ENCODE measurements at regions of chr3 and their contacts with region 1.

Region 1: GRCh38 chr3:39288300-39288808 is 8.5 kb upstream of the CX3CR1 start:
- DNase-seq: peak; percentile 90
- ATAC-seq: peak; percentile 96
- H3K4me3 Mint-ChIP-seq: no peak overlapping the region
- H3K27ac Mint-ChIP-seq: no peak overlapping the region
- H3K4me1 Mint-ChIP-seq: peaks cover 13% of the 10 kb centered on the region
- H3K27me3 Mint-ChIP-seq: no peaks in the 10 kb centered on the region

Region 2: DNA sequence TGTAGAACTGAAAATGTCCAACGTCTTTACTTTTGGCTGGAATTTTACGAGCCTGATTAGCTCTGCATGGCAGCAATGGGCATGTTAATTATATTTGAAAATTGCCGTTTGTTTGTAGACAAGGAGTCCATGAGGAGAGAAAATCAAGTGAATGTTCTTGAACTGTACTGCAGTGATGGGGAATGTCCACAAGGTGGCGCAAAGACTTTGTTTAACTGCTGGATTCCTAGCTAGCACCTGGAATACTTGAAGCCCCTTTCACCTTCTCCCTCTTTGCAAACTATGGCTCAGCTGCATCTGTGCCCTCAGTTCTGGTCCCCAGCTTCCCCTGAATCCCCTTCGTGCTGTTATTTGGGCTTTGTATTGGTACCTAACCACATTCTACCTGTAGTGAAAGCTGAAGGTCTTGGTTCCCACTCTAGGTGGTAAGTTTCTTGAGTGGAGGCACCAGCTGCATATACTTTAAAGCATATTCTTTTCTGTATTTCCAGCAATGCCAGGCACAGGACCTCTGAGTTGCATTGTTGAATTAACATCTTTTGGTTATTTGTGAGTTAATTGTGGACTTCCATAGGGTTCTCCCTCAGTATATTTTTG is 766.9 kb before region 1 on chr3:
- CTCF ChIA-PET with region 1: interaction called, 3 read pairs
- POLR2A ChIA-PET with region 1: no interaction called
- intact Hi-C with region 1: loop called in 1 of 2 experiments (anchors 5 kb)
- DNase-seq: peak; percentile 75
- ATAC-seq: peak; percentile 74
- H3K4me3 Mint-ChIP-seq: no peak overlapping the region
- H3K27ac Mint-ChIP-seq: no peak overlapping the region
- H3K4me1 Mint-ChIP-seq: peaks cover 23% of the 10 kb centered on the region
- H3K27me3 Mint-ChIP-seq: no peaks in the 10 kb centered on the region

Region 3: DNA sequence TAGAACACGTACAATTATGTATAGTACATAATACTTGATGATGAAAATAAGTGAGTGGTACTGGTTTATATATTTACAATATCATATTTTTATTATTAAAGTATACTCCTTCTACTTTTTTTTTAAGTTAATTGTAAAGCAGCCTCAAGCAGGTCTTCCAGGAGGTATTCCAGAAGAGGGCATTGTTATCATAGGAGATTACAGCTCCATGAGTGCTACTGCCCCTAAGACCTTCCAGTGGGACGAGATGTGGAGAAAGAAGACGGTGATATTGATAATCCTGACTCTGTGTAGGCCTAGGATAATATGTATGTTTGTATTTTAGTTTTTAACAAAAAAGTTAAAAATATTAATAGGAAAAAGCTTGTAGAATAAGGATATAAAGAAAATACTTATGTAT is 598.6 kb before region 1 on chr3:
- CTCF ChIA-PET with region 1: no interaction called
- POLR2A ChIA-PET with region 1: no interaction called
- intact Hi-C with region 1: no loop called
- DNase-seq: no peak
- ATAC-seq: no peak
- H3K4me3 Mint-ChIP-seq: no peak overlapping the region
- H3K27ac Mint-ChIP-seq: no peak overlapping the region
- H3K4me1 Mint-ChIP-seq: no peaks in the 10 kb centered on the region
- H3K27me3 Mint-ChIP-seq: peaks cover 4% of the 10 kb centered on the region

Region 4: GRCh38 chr3:38878646-38879045 is 409.7 kb before region 1 on chr3:
- CTCF ChIA-PET with region 1: no interaction called
- POLR2A ChIA-PET with region 1: no interaction called
- intact Hi-C with region 1: no loop called
- DNase-seq: no peak
- ATAC-seq: no peak
- H3K4me3 Mint-ChIP-seq: no peak overlapping the region
- H3K27ac Mint-ChIP-seq: no peak overlapping the region
- H3K4me1 Mint-ChIP-seq: no peaks in the 10 kb centered on the region
- H3K27me3 Mint-ChIP-seq: peaks cover 5% of the 10 kb centered on the region

Region 5: DNA sequence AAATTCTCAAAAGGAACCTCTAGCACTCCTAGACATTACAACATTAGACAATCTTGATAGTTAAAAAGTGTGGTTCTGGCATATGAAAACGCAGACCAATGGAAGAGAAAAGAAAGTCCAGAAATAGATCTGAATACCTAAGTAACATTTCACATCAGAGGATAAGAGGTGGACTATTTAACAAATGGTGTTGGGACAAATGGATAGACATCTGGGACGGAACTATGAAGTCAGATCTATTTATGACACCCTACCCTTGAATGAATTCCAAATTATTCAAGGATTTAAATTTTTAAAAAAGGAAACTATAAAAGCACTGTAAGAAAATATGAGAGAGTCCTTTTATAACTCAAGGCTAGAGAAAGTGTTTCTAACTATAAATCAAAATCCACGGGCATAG is 348.0 kb before region 1 on chr3:
- CTCF ChIA-PET with region 1: no interaction called
- POLR2A ChIA-PET with region 1: no interaction called
- intact Hi-C with region 1: no loop called
- DNase-seq: no peak
- ATAC-seq: no peak
- H3K4me3 Mint-ChIP-seq: no peak overlapping the region
- H3K27ac Mint-ChIP-seq: no peak overlapping the region
- H3K4me1 Mint-ChIP-seq: no peaks in the 10 kb centered on the region
- H3K27me3 Mint-ChIP-seq: no peaks in the 10 kb centered on the region

Region 6: GRCh38 chr3:39013289-39013688 is 275.1 kb before region 1 on chr3:
- CTCF ChIA-PET with region 1: no interaction called
- POLR2A ChIA-PET with region 1: no interaction called
- intact Hi-C with region 1: no loop called
- DNase-seq: no peak
- ATAC-seq: no peak
- H3K4me3 Mint-ChIP-seq: no peak overlapping the region
- H3K27ac Mint-ChIP-seq: no peak overlapping the region
- H3K4me1 Mint-ChIP-seq: no peaks in the 10 kb centered on the region
- H3K27me3 Mint-ChIP-seq: peaks cover 7% of the 10 kb centered on the region

Region 7: GRCh38 chr3:39101022-39101689 is 187.2 kb before region 1 on chr3:
- CTCF ChIA-PET with region 1: interaction called, 29 read pairs
- POLR2A ChIA-PET with region 1: no interaction called
- intact Hi-C with region 1: loop called (anchors 1 to 2 kb)
- DNase-seq: peak; percentile 67
- ATAC-seq: peak; percentile 87
- H3K4me3 Mint-ChIP-seq: no peak overlapping the region
- H3K27ac Mint-ChIP-seq: no peak overlapping the region
- H3K4me1 Mint-ChIP-seq: peaks cover 16% of the 10 kb centered on the region
- H3K27me3 Mint-ChIP-seq: no peaks in the 10 kb centered on the region

Region 8: DNA sequence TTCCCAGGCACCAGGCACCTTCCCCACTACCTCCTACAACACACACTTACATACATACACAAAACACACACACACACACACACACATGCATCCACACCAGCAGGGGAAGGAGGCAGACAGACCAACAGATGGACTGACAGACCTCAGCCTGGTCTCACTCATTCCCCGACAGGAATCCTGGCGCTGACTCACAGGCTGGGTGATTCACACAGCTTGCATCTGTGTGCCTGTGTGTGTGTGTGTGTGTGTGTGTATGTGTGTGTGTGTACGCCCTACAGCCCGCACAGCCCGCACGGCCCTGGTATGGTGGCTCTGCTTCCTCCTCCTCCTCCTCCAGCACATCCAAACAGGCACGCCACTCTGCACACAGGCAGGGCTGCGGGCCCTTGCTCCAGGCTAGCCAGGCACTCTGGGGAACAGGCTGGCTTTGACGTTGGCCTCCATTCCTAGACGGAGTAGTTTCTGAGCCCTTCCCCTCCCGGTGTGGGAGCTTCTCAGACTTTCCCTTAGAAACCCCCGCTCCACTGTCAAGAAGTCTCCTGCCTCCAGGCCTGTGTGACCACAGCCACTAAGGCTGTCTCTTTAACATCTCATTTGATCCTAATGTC is 141.3 kb before region 1 on chr3:
- CTCF ChIA-PET with region 1: interaction called, 10 read pairs
- POLR2A ChIA-PET with region 1: interaction called, 3 read pairs
- intact Hi-C with region 1: no loop called
- DNase-seq: peak; percentile 90
- ATAC-seq: peak; percentile 68
- H3K4me3 Mint-ChIP-seq: peak overlapping the region; percentile 93
- H3K27ac Mint-ChIP-seq: peak overlapping the region; percentile 95
- H3K4me1 Mint-ChIP-seq: peaks cover 68% of the 10 kb centered on the region
- H3K27me3 Mint-ChIP-seq: no peaks in the 10 kb centered on the region

Region 9: GRCh38 chr3:39216176-39216790 is 72.1 kb before region 1 on chr3:
- CTCF ChIA-PET with region 1: interaction called, 15 read pairs
- POLR2A ChIA-PET with region 1: no interaction called
- intact Hi-C with region 1: no loop called
- DNase-seq: no peak
- ATAC-seq: peak; percentile 36
- H3K4me3 Mint-ChIP-seq: no peak overlapping the region
- H3K27ac Mint-ChIP-seq: no peak overlapping the region
- H3K4me1 Mint-ChIP-seq: peaks cover 3% of the 10 kb centered on the region
- H3K27me3 Mint-ChIP-seq: peaks cover 7% of the 10 kb centered on the region

Region 10: GRCh38 chr3:39260957-39261356 is 27.4 kb before region 1 on chr3:
- CTCF ChIA-PET with region 1: interaction called, 16 read pairs
- POLR2A ChIA-PET with region 1: interaction called, 3 read pairs
- intact Hi-C with region 1: no loop called
- DNase-seq: peak; percentile 76
- ATAC-seq: peak; percentile 85
- H3K4me3 Mint-ChIP-seq: no peak overlapping the region
- H3K27ac Mint-ChIP-seq: no peak overlapping the region
- H3K4me1 Mint-ChIP-seq: peaks cover 33% of the 10 kb centered on the region
- H3K27me3 Mint-ChIP-seq: peaks cover 3% of the 10 kb centered on the region

Region 11: GRCh38 chr3:39317571-39318169 is 29.3 kb after region 1 on chr3:
- CTCF ChIA-PET with region 1: interaction called, 11 read pairs
- POLR2A ChIA-PET with region 1: no interaction called
- intact Hi-C with region 1: no loop called
- DNase-seq: no peak
- ATAC-seq: no peak
- H3K4me3 Mint-ChIP-seq: no peak overlapping the region
- H3K27ac Mint-ChIP-seq: no peak overlapping the region
- H3K4me1 Mint-ChIP-seq: peaks cover 24% of the 10 kb centered on the region
- H3K27me3 Mint-ChIP-seq: no peaks in the 10 kb centered on the region

Measured in activated CD4-positive, alpha-beta T cell treated with anti-CD3 and anti-CD28 coated beads for 36 hours (primary cell).